ENCODE measurements at regions of chr19 and their contacts with region 1.

Region 1: GRCh38 chr19:44071824-44072542 is at the start of gene ZNF284:
- DNase-seq: peak; percentile 61 to 88 (median 84)
- ATAC-seq: peak; percentile 99
- H3K4me3 ChIP-seq: peak within 1 kb of the TSS; percentile 85
- H3K4me3 Mint-ChIP-seq: peak within 1 kb of the TSS; percentile 88 to 98 (median 92)
- H3K27ac ChIP-seq: peak within 1 kb of the TSS; percentile 63
- H3K27ac Mint-ChIP-seq: peak within 1 kb of the TSS; percentile 47 to 91 (median 75)
- H3K4me1 ChIP-seq: peaks cover 15 to 17% of the 10 kb centered on the region in 2 donors
- H3K4me1 Mint-ChIP-seq: peaks cover 20 to 40% (median 27%) of the 10 kb centered on the region in 7 donors
- H3K27me3 ChIP-seq: no peaks in the 10 kb centered on the region
- H3K27me3 Mint-ChIP-seq: no peaks in the 10 kb centered on the region
- total RNA-seq, gene ZNF284: 1.9 to 4.4 (median 2.4) TPM

Region 2: GRCh38 chr19:43934985-43935708 is 136.8 kb before region 1 on chr19 and contains the start of gene ZNF45:
- CTCF ChIA-PET with region 1: no interaction called
- POLR2A ChIA-PET with region 1: no interaction called
- intact Hi-C with region 1: loop called in 1 of 2 experiments (anchors 1 kb)
- DNase-seq: peak; percentile 65 to 89 (median 86)
- ATAC-seq: peak; percentile 98
- H3K4me3 ChIP-seq: peak within 1 kb of the TSS; percentile 84
- H3K4me3 Mint-ChIP-seq: peak within 1 kb of the TSS; percentile 93 to 98 (median 96)
- H3K27ac ChIP-seq: peak within 1 kb of the TSS; percentile 81
- H3K27ac Mint-ChIP-seq: peak within 1 kb of the TSS; percentile 81 to 96 (median 93)
- H3K4me1 ChIP-seq: peaks cover 16 to 17% of the 10 kb centered on the region in 2 donors
- H3K4me1 Mint-ChIP-seq: peaks cover 10 to 46% (median 32%) of the 10 kb centered on the region in 7 donors
- H3K27me3 ChIP-seq: no peaks in the 10 kb centered on the region
- H3K27me3 Mint-ChIP-seq: peaks cover 0 to 7% (median 0%) of the 10 kb centered on the region in 5 donors
- total RNA-seq, gene ZNF45: 8.4 to 28.5 (median 15.3) TPM

Region 3: DNA sequence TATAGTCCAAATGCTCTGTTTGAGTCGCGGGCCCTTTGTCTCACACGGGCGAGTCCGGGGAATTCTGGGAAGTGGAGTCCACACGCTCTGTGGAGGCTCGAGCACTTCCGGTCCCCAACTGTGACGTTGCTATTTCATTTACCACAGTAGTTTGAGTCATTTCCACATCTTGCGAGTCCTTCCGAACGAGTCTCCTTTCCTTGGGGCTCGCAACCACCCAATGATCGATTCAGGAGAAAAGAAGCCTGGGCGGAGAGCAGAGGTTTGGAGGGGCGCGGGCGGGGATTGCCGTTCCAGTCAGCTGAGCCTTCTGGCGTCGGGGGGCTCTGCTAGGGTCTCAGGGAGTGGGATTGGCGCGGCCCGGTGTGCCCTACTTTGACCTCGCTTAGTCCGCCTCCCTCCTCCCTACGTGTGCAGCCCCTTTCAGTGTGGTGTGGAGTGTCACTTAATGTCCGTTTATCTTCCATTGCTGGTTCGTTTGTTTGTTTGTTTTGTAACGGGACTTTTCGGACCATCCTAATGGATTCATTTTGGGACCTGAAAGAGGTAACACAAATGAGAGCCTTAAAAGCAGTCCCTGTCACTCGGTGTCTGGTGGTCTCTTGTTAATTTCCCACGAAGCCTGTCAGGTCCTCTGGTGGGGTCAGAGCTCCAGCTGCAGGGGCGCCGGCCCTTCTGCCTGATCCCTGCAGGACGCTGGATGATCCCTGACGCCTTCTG is 46.6 kb before region 1 on chr19 and contains the start of gene ZNF222:
- CTCF ChIA-PET with region 1: no interaction called
- POLR2A ChIA-PET with region 1: no interaction called
- intact Hi-C with region 1: loop called (anchors 1 kb)
- DNase-seq: peak; percentile 41 to 78 (median 66)
- ATAC-seq: peak; percentile 99
- H3K4me3 ChIP-seq: peak within 1 kb of the TSS; percentile 76
- H3K4me3 Mint-ChIP-seq: peak within 1 kb of the TSS; percentile 95 to 100 (median 98)
- H3K27ac ChIP-seq: peak within 1 kb of the TSS; percentile 71
- H3K27ac Mint-ChIP-seq: peak within 1 kb of the TSS; percentile 84 to 98 (median 94)
- H3K4me1 ChIP-seq: peaks cover 5 to 9% of the 10 kb centered on the region in 2 donors
- H3K4me1 Mint-ChIP-seq: peaks cover 12 to 40% (median 31%) of the 10 kb centered on the region in 7 donors
- H3K27me3 ChIP-seq: no peaks in the 10 kb centered on the region
- H3K27me3 Mint-ChIP-seq: peaks cover 0 to 9% (median 3%) of the 10 kb centered on the region in 5 donors
- total RNA-seq, gene ZNF222: 2.9 to 10.1 (median 4.5) TPM

Region 4: GRCh38 chr19:44113138-44113783 is 41.3 kb after region 1 on chr19 and contains the start of gene ZNF225:
- CTCF ChIA-PET with region 1: no interaction called
- POLR2A ChIA-PET with region 1: no interaction called
- intact Hi-C with region 1: loop called (anchors 1 kb)
- DNase-seq: peak; percentile 41 to 84 (median 76)
- ATAC-seq: peak; percentile 100
- H3K4me3 ChIP-seq: peak within 1 kb of the TSS; percentile 89
- H3K4me3 Mint-ChIP-seq: peak within 1 kb of the TSS; percentile 95 to 100 (median 99)
- H3K27ac ChIP-seq: peak within 1 kb of the TSS; percentile 68
- H3K27ac Mint-ChIP-seq: peak within 1 kb of the TSS; percentile 82 to 97 (median 88)
- H3K4me1 ChIP-seq: peaks cover 3 to 8% of the 10 kb centered on the region in 2 donors
- H3K4me1 Mint-ChIP-seq: peaks cover 16 to 38% (median 31%) of the 10 kb centered on the region in 7 donors
- H3K27me3 ChIP-seq: no peaks in the 10 kb centered on the region
- H3K27me3 Mint-ChIP-seq: no peaks in the 10 kb centered on the region
- total RNA-seq, gene ZNF225: 0.69 to 13.0 (median 5.1) TPM

Region 5: DNA sequence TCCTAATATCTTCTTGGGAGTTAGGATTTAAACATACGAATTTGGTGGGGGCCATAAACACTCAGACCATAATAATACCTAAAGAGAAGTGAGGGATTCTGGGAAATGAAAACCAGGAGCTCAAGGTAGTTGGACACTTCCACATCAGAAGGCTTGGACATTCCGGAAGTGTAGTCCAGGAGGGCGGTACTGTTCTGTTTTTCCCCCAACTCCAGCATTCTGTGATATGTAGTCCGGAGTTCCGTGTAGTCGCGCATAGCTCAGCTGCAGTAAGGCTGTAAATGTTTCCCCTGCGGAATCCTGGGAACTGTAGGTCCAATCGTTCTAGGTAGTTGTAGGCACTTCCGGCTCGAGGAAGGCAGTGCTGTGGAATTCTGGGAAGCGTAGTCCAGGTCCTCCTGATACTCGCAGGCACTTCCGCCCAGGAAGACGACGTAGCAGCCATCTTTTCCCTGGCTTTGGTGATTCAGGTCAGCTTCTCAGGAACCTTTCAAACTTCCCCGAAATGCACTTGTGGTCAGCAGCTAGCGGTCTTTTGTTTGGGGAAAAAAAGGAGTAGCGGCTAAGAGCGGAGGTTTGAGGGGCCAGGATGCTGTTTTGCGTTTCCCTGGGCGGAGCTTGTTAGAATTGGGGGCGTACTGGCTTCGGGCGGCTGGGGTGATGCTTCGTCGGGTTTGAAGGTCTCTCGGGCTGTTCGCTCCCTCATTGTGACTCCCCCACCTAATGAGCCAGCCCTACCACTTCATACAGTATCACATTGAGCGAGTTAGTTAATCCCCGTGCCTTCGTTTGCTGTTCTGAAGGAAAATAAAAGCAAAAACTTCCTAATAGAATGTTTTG is 92.9 kb after region 1 on chr19 and contains the start of gene ZNF226:
- CTCF ChIA-PET with region 1: interaction called, 3 read pairs
- POLR2A ChIA-PET with region 1: no interaction called
- intact Hi-C with region 1: loop called in 1 of 2 experiments (anchors 1 kb)
- DNase-seq: peak; percentile 24 to 83 (median 75)
- ATAC-seq: peak; percentile 97
- H3K4me3 ChIP-seq: peak within 1 kb of the TSS; percentile 87
- H3K4me3 Mint-ChIP-seq: peak within 1 kb of the TSS; percentile 97 to 99 (median 98)
- H3K27ac ChIP-seq: peak within 1 kb of the TSS; percentile 78
- H3K27ac Mint-ChIP-seq: peak within 1 kb of the TSS; percentile 84 to 99 (median 97)
- H3K4me1 ChIP-seq: peaks cover 6 to 9% of the 10 kb centered on the region in 2 donors
- H3K4me1 Mint-ChIP-seq: peaks cover 10 to 40% (median 40%) of the 10 kb centered on the region in 7 donors
- H3K27me3 ChIP-seq: no peaks in the 10 kb centered on the region
- H3K27me3 Mint-ChIP-seq: no peaks in the 10 kb centered on the region
- total RNA-seq, gene ZNF226: 14.0 to 59.9 (median 20.3) TPM

Region 6: GRCh38 chr19:44212250-44212865 is 140.4 kb after region 1 on chr19 and contains the start of gene ZNF227:
- CTCF ChIA-PET with region 1: no interaction called
- POLR2A ChIA-PET with region 1: no interaction called
- intact Hi-C with region 1: loop called (anchors 1 kb)
- DNase-seq: peak; percentile 47 to 80 (median 75)
- ATAC-seq: peak; percentile 98
- H3K4me3 ChIP-seq: peak within 1 kb of the TSS; percentile 98
- H3K4me3 Mint-ChIP-seq: peak within 1 kb of the TSS; percentile 85 to 100 (median 96)
- H3K27ac ChIP-seq: peak within 1 kb of the TSS; percentile 81
- H3K27ac Mint-ChIP-seq: peak within 1 kb of the TSS; percentile 82 to 97 (median 92)
- H3K4me1 ChIP-seq: peaks cover 0 to 15% of the 10 kb centered on the region in 2 donors
- H3K4me1 Mint-ChIP-seq: peaks cover 19 to 45% (median 31%) of the 10 kb centered on the region in 7 donors
- H3K27me3 ChIP-seq: no peaks in the 10 kb centered on the region
- H3K27me3 Mint-ChIP-seq: peaks cover 0 to 4% (median 0%) of the 10 kb centered on the region in 5 donors
- total RNA-seq, gene ZNF227: 18.3 to 51.5 (median 30.0) TPM

Region 7: DNA sequence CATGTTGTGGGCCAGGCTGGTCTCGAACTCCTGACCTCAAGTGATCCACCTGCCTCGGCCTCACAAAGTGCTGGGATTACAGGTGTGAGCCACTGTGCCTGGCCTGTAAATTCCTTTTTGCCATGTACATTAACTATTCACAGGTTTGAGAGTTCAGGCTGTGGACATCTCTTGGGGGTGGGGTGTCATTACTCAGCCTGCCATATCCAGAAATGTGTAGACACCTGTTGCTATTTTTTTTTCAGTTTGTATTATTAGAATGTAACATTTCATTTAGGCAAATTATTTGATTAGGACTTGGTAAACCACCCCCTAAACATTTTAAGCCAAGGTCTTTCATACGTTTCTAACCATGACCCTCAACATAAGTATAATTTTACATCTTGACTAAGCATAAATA is 160.9 kb after region 1 on chr19:
- CTCF ChIA-PET with region 1: no interaction called
- POLR2A ChIA-PET with region 1: no interaction called
- intact Hi-C with region 1: no loop called
- DNase-seq: no peak
- ATAC-seq: no peak
- H3K4me3 ChIP-seq: no peak overlapping the region
- H3K4me3 Mint-ChIP-seq: no peak overlapping the region
- H3K27ac ChIP-seq: no peak overlapping the region
- H3K27ac Mint-ChIP-seq: no peak overlapping the region
- H3K4me1 ChIP-seq: no peaks in the 10 kb centered on the region
- H3K4me1 Mint-ChIP-seq: peaks cover 0 to 5% (median 0%) of the 10 kb centered on the region in 7 donors
- H3K27me3 ChIP-seq: no peaks in the 10 kb centered on the region
- H3K27me3 Mint-ChIP-seq: no peaks in the 10 kb centered on the region